ENCODE measurements at regions of chr15 and their contacts with region 1.

Region 1: DNA sequence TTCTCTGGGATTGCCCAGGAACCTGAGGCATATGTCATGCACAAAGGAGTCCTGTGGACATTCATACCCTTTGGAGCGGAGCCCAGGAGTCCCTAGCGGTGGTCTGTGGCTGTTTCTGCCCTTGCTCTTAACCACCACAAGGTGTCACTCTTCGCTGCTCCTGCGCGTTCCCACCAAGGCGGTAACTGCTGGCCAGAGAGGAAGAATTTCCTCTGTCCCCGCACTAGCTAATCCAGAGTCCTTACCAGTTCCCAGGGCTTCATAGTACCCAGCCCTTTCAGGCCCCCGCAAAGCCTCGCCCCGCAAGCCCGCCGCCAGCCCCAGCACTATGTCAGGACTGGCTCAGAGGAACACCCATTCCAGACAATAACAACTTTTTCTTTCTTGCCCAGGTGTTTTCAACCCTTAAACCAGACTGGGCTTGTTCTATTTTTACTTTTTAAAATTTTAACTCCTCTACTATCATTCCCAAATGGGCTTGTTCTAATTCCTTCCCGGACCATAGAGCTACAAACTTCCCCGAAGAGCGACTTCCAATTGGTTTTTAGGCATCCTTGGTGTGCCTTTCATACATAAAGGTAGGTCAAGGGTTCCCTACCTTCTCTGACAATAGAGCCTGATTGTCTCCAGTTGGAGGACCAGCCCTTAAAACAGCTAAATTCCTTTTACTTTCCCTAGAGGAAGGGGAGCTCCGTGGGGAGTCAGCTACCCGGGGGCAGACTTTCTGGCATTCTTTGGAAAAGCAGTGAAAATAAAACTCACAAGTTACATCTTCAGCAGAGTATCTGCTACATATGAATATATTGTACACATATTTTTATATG is 31.8 kb upstream of the ZNF774 start:
- DNase-seq: peak; percentile 80
- ATAC-seq: peak; percentile 96
- H3K4me3 Mint-ChIP-seq: peak overlapping the region; percentile 68
- H3K27ac Mint-ChIP-seq: peak overlapping the region; percentile 95
- H3K4me1 Mint-ChIP-seq: peaks cover 13% of the 10 kb centered on the region
- H3K27me3 Mint-ChIP-seq: no peaks in the 10 kb centered on the region
- CTCF ChIP-seq: peak; percentile 89

Region 2: GRCh38 chr15:90126457-90127435 is 193.5 kb before region 1 on chr15:
- CTCF ChIA-PET with region 1: no interaction called
- POLR2A ChIA-PET with region 1: no interaction called
- DNase-seq: peak; percentile 83
- ATAC-seq: peak; percentile 96
- H3K4me3 Mint-ChIP-seq: no peak overlapping the region
- H3K27ac Mint-ChIP-seq: peak overlapping the region; percentile 97
- H3K4me1 Mint-ChIP-seq: peaks cover 23% of the 10 kb centered on the region
- H3K27me3 Mint-ChIP-seq: no peaks in the 10 kb centered on the region; the same call in 1 of the 2 replicates
- CTCF ChIP-seq: no peak

Region 3: DNA sequence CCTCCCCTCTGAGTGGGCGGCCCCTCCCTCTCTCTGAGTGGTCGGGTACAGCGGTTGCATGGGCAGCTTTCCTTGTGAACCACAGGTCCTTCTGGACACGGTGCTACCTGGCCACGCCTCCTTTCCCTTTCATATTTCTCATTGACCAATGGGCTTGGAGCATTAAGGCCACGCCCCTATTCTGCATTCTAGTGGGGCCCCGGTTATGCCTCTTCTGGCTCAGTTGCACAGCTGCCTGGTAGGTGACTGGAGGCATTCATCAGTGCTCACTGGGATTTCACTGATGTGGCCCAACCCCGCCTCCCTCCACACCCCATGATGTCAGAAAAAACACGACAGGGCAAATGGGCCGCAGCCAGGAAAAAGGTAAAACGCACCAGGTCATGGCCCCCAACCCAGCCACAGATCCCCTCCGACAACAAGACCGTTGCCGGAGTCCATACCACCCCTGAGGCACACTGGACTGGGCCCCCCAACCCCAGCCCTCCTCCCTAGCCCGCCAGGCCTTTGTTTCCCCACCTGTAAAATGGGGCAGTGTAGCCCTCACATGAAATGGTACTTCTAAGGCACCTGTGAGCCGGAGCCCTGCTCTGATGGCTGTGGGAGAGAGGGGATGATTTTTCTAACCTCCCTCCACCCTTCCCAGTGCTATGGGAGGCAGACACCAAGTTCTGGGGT is 28.5 kb before region 1 on chr15:
- CTCF ChIA-PET with region 1: interaction called, 68 read pairs
- POLR2A ChIA-PET with region 1: no interaction called
- DNase-seq: peak; percentile 41
- ATAC-seq: no peak
- H3K4me3 Mint-ChIP-seq: no peak overlapping the region
- H3K27ac Mint-ChIP-seq: no peak overlapping the region
- H3K4me1 Mint-ChIP-seq: peaks cover 35% of the 10 kb centered on the region
- H3K27me3 Mint-ChIP-seq: no peaks in the 10 kb centered on the region
- CTCF ChIP-seq: no peak

Region 4: DNA sequence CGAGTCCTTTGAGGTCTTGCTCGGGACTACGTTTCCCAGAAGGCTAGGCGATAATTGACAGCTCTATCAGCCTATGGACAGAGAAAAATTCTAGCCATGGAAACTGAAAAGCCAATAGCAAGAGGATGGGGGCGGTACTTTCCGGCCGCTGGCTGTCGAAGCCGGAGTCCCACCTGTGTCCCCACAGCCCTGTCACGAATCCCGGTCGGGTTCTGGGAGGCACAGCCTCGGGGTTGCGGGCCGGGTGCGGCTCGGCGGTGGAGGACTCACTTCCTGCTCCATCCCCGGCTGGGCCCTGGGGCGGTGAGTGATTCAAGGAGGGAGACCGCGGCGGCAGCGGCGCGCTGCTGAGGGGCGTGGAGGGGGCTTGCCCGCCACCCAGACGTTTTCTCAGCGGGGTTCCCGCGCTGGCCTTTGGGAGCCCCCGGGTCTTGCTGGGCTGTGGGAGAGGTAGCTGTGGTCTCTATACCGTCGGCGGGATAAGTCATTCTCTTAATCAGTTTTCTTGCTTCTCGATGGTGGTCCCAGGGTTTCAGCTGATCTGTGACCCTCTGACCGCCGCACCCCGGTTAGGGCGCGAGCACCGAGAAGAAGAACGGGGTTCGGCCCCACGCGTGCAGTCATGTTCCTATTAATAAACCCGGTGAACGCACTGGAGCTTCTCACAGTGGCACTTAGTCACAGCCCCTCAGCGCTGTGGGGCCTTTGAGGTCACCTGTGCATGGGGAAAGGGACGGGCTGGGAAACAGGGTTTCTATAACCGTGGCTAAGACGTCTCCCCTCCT is 32.0 kb after region 1 on chr15 and contains the start of gene ZNF774:
- CTCF ChIA-PET with region 1: interaction called, 16 read pairs
- POLR2A ChIA-PET with region 1: no interaction called
- DNase-seq: peak; percentile 93
- ATAC-seq: peak; percentile 97
- H3K4me3 Mint-ChIP-seq: peak within 1 kb of the TSS; percentile 82
- H3K27ac Mint-ChIP-seq: no peak within 1 kb of the TSS
- H3K4me1 Mint-ChIP-seq: no peaks in the 10 kb centered on the region
- H3K27me3 Mint-ChIP-seq: peaks cover 7% of the 10 kb centered on the region
- CTCF ChIP-seq: no peak
- total RNA-seq, gene ZNF774: 2.6 to 3.6 TPM (median 2.9 TPM) in 3 replicates

Region 5: GRCh38 chr15:90439946-90440345 is 119.7 kb after region 1 on chr15:
- CTCF ChIA-PET with region 1: interaction called, 11 read pairs
- POLR2A ChIA-PET with region 1: interaction called, 8 read pairs
- DNase-seq: no peak
- ATAC-seq: no peak
- H3K4me3 Mint-ChIP-seq: no peak overlapping the region
- H3K27ac Mint-ChIP-seq: no peak overlapping the region
- H3K4me1 Mint-ChIP-seq: 0 out of 2 replicates have a peak, but pooled peaks cover 5% of the 10 kb centered on the region
- H3K27me3 Mint-ChIP-seq: no peaks in the 10 kb centered on the region
- CTCF ChIP-seq: no peak

Region 6: DNA sequence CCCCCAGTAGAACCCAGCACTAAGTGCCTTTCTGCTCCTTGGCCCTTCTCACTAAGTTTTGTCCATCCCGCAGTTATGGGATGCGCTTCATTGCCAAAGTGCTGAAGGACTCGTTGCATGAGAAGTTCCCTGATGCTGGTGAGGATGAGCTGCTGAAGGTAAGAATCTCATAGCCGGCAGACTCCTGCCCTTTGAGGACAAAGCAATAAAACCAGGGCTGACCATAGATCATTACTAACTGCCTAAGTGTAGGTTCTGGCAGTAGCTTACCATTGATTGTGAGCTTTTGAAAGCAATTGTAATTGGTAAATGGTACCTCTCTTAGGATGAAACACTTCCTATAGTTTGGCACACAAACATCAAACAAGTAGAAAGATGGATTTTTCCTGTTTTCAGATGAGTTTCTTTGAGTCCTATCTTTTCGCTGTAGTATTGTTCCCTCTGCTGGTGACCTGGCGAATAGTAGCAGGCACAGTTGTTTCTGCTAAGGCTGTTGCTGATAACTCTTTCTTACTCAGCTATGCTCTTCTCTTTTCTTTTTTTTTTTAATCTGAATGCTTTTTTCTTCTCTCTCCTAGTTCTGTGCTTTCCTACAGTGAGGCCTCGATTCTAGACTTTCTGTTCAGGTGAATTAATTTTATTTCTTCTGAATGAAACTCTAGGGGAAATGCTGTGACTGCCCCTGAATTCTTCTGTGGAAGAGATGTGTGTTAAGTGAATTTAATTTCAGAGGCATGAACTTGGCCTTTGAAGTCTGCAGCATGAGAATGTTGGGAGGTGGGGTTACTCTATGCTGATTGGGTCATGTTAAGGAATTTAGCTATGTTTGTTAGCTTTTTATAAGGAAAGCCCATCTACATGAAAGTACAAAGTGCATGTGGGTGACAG is 162.1 kb after region 1 on chr15:
- CTCF ChIA-PET with region 1: interaction called, 97 read pairs
- POLR2A ChIA-PET with region 1: interaction called, 4 read pairs
- DNase-seq: peak; percentile 60
- ATAC-seq: peak; percentile 55
- H3K4me3 Mint-ChIP-seq: no peak overlapping the region
- H3K27ac Mint-ChIP-seq: no peak overlapping the region
- H3K4me1 Mint-ChIP-seq: no peaks in the 10 kb centered on the region
- H3K27me3 Mint-ChIP-seq: no peaks in the 10 kb centered on the region
- CTCF ChIP-seq: no peak; the same call in 1 of the 2 replicates

Region 7: DNA sequence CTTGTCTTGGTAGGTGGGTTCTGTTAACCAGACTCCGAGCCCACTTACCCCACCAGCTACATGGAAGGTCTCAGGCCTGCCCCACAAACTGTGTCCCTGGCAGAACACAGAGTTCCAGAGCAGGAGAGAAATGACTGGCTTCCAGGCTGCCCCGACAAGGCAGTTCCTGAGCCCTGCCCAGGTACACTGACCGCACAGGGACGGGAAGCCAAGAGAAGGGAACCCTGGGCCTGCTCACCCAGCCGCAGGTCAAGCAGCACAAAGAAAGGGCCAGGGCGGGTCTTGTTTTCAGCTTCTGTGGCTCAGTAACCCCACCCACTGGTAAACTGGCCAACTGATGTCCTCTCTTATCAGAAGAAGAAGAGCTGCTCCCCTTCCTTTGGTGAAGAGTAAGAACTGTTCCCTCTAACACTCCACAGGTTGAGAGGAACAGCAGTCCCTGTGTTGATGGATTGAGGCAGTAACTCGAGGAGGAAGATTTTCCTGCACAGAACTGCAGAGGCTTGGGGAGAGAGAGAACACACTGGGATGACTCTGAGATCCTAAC is 277.8 kb after region 1 on chr15:
- CTCF ChIA-PET with region 1: interaction called, 12 read pairs
- POLR2A ChIA-PET with region 1: no interaction called
- DNase-seq: peak; percentile 50
- ATAC-seq: peak; percentile 89
- H3K4me3 Mint-ChIP-seq: no peak overlapping the region
- H3K27ac Mint-ChIP-seq: no peak overlapping the region; the same call in 1 of the 2 replicates
- H3K4me1 Mint-ChIP-seq: peaks cover 21% of the 10 kb centered on the region
- H3K27me3 Mint-ChIP-seq: no peaks in the 10 kb centered on the region
- CTCF ChIP-seq: no peak